Psoas muscle (tissue), 8 donors: ENCODE measurements at regions of chr3 and their contacts with region 1.

Region 1: GRCh38 chr3:17322106-17322793 is 420.2 kb downstream of the TBC1D5 start:
- DNase-seq: no peak
- ATAC-seq: no peak
- H3K4me3 ChIP-seq: no peak overlapping the region
- H3K27ac ChIP-seq: no peak overlapping the region
- H3K4me1 ChIP-seq: no peaks in the 10 kb centered on the region
- H3K27me3 ChIP-seq: no peaks in the 10 kb centered on the region
- CTCF ChIP-seq: no peak

Region 2: GRCh38 chr3:17355591-17355990 is 33.3 kb after region 1 on chr3:
- intact Hi-C with region 1: no loop called
- DNase-seq: no peak
- ATAC-seq: no peak
- H3K4me3 ChIP-seq: no peak overlapping the region
- H3K27ac ChIP-seq: no peak overlapping the region
- H3K4me1 ChIP-seq: no peaks in the 10 kb centered on the region
- H3K27me3 ChIP-seq: no peaks in the 10 kb centered on the region
- CTCF ChIP-seq: no peak

Region 3: GRCh38 chr3:17398959-17399551 is 76.8 kb after region 1 on chr3:
- intact Hi-C with region 1: loop called in 1 of 2 experiments (anchors 10 kb)
- DNase-seq: no peak
- ATAC-seq: no peak
- H3K4me3 ChIP-seq: no peak overlapping the region
- H3K27ac ChIP-seq: no peak overlapping the region
- H3K4me1 ChIP-seq: no peaks in the 10 kb centered on the region
- H3K27me3 ChIP-seq: no peaks in the 10 kb centered on the region
- CTCF ChIP-seq: no peak

Region 4: DNA sequence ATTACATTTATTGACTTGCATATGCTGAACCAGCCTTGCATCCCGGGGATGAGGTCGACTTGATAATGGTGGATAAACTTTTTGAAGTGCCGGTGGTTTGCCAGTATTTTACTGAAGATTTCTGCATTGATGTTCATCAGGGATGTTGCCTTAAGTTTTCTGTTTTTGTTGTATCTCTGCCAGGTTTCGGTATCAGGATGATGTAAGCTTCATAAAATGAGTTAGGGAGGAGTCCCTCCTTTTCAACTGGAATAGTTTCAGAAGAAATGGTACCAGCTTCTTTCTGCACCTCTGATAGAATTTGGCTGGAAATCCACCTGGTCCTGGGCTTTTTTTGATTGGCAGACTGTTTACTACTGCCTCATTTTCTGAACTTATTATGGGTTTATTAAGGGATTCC is 169.4 kb after region 1 on chr3:
- intact Hi-C with region 1: no loop called
- DNase-seq: no peak
- ATAC-seq: no peak
- H3K4me3 ChIP-seq: no peak overlapping the region
- H3K27ac ChIP-seq: no peak overlapping the region
- H3K4me1 ChIP-seq: no peaks in the 10 kb centered on the region
- H3K27me3 ChIP-seq: no peaks in the 10 kb centered on the region
- CTCF ChIP-seq: no peak